CD4-positive, alpha-beta memory T cell (primary cell): ENCODE measurements at regions of chr12 and their contacts with region 1.

Region 1: DNA sequence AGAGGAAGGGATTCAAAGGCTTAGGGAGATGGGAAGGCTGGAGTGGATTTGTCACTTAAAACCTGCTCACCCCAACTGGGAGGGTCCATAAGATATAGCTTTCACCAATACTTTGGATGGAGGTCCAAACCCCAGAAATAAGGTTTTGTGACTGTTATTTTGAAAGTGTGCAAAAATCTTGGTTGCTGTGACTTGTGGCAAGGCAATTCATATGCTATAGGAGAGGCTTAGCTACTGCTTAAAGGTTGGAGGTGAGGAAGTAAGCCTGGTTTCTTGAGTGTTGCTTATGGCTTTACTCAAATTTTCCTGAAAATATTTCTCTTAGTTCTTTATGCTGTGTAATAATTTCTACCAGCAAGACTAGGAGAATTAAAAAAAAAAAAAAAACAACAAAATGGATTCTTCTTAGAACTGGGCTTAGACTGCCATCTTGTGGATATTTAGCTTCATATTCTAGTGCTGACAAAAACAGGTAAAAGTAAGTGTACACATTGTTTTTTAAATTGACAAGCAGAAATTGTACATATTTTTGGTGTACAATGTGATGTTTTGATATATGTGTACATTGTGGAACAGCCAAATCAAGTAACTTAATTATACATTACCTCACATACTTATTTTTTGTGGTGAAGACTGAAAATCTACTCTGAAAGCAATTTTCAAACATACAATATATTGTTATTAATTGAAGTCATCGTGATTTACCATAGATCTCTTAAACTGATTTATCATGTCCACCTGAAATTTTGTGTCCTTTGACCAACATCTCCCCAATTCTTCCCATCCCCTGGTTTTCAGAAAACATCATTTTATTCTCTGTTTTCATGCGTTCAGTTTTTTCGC is 23.0 kb downstream of the PDE6H start:
- DNase-seq: peak in 4 of 5 donors; percentile 59 to 74 (median 64)
- H3K4me3 ChIP-seq: no peak overlapping the region
- H3K4me3 Mint-ChIP-seq: peak overlapping the region in 3 of 8 donors; percentile 47 to 65 (median 64)
- H3K27ac ChIP-seq: no peak overlapping the region
- H3K27ac Mint-ChIP-seq: peak overlapping the region; percentile 8 to 89 (median 58)
- H3K4me1 ChIP-seq: peaks cover 24% of the 10 kb centered on the region
- H3K4me1 Mint-ChIP-seq: peaks cover 22 to 28% (median 25%) of the 10 kb centered on the region in 4 donors
- H3K27me3 ChIP-seq: peaks cover 3% of the 10 kb centered on the region
- H3K27me3 Mint-ChIP-seq: peaks cover 4 to 5% of the 10 kb centered on the region in 2 donors

Region 2: DNA sequence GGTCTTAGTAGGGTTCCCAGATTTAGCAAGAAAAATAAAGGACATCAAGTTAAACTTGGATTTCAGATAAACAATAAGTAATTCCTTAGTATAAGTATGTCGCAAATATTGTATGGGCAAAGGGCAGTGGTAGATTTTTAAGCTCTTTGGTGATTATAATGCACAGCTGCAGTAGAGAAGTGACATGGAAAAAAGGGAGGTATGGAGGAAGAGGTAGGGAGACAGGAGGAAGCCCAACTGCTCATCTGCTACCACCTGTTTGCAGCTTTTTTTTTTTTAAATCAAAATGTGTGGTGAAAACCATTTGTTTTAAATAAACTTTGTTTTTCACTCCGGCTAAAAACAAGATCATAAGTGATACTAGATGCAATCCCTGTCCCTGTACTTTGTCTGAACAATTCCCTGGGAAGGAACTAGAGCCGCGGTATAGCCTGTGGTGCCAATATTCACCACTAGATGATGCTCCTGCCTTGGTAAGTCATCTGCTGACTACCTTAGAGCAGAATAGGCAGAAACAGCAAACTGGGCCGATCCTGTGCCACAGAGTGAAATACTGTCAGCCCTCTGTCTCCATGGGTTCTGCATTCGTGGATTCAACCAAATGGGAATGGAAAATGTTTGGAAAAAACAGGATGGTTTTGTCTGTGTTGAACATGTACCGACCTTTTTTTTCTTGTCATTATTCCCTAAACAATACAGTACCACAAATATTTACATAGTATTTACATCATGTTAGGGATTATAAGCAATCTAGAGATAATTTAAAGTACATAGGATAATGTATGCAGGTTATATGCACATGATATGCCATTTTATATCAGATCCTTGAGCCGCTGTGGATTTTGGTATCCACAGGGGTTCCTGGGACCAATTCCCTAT is 365.7 kb before region 1 on chr12:
- CTCF ChIA-PET with region 1: no interaction called
- POLR2A ChIA-PET with region 1: no interaction called
- intact Hi-C with region 1: loop called (anchors 1 kb)
- DNase-seq: peak; percentile 60 to 67 (median 65)
- H3K4me3 ChIP-seq: no peak overlapping the region
- H3K4me3 Mint-ChIP-seq: no peak overlapping the region
- H3K27ac ChIP-seq: no peak overlapping the region
- H3K27ac Mint-ChIP-seq: no peak overlapping the region
- H3K4me1 ChIP-seq: no peaks in the 10 kb centered on the region
- H3K4me1 Mint-ChIP-seq: no peaks in the 10 kb centered on the region
- H3K27me3 ChIP-seq: no peaks in the 10 kb centered on the region
- H3K27me3 Mint-ChIP-seq: peaks cover 3 to 5% of the 10 kb centered on the region in 2 donors

Region 3: GRCh38 chr12:14810953-14811483 is 184.8 kb before region 1 on chr12:
- CTCF ChIA-PET with region 1: interaction called, 10 read pairs
- POLR2A ChIA-PET with region 1: no interaction called
- intact Hi-C with region 1: no loop called
- DNase-seq: no peak
- H3K4me3 ChIP-seq: no peak overlapping the region
- H3K4me3 Mint-ChIP-seq: peak overlapping the region in 1 of 8 donors; percentile 45
- H3K27ac ChIP-seq: no peak overlapping the region
- H3K27ac Mint-ChIP-seq: no peak overlapping the region
- H3K4me1 ChIP-seq: peaks cover 12% of the 10 kb centered on the region
- H3K4me1 Mint-ChIP-seq: peaks cover 5 to 14% (median 11%) of the 10 kb centered on the region in 4 donors
- H3K27me3 ChIP-seq: no peaks in the 10 kb centered on the region
- H3K27me3 Mint-ChIP-seq: no peaks in the 10 kb centered on the region

Region 4: DNA sequence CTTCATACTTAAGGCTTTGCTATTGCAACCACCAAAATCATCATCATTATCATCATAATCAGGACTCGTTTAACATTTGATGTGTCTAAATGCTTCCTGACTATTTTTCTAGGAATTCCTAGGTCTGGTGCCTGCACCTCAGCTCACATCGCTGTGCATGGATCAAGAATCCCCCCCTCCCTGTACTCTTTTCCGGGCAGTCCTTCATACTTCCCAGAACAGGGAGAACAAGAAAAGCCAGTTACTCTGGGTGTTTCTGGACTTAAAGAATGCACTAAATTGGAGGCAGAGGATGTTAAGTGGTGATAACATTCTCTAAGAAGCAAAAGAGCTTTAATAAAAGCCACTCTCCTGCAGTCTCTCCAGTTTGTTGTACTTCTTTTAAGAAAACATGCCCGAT is 66.8 kb before region 1 on chr12:
- CTCF ChIA-PET with region 1: interaction called, 91 read pairs
- POLR2A ChIA-PET with region 1: interaction called, 3 read pairs
- intact Hi-C with region 1: no loop called
- DNase-seq: no peak
- H3K4me3 ChIP-seq: no peak overlapping the region
- H3K4me3 Mint-ChIP-seq: no peak overlapping the region
- H3K27ac ChIP-seq: no peak overlapping the region
- H3K27ac Mint-ChIP-seq: peak overlapping the region in 3 of 7 donors; percentile 12 to 79 (median 69)
- H3K4me1 ChIP-seq: no peaks in the 10 kb centered on the region
- H3K4me1 Mint-ChIP-seq: peaks cover 2 to 10% (median 5%) of the 10 kb centered on the region in 4 donors
- H3K27me3 ChIP-seq: no peaks in the 10 kb centered on the region
- H3K27me3 Mint-ChIP-seq: no peaks in the 10 kb centered on the region

Region 5: DNA sequence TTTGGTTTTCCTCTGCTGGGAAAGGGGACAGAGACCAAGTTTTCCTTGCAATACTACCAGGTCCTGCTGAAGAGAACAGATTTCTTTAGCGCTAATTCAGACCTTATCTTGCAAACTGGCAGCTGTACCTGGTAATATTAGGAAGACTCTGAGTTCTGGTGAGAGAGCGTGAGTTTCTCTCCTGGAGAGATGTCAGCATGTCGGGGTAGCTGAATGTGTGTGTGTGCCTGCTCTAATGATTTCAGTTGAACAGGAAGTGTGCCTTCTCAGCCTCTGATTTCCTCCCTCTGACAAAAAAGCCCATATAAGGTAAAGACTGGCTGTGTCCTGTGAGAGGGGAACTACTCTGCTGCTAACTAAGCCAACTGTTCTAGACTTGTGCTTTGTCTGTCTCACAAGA is 47.1 kb before region 1 on chr12:
- CTCF ChIA-PET with region 1: interaction called, 9 read pairs
- POLR2A ChIA-PET with region 1: interaction called, 13 read pairs
- intact Hi-C with region 1: no loop called
- DNase-seq: peak; percentile 76 to 86 (median 83)
- H3K4me3 ChIP-seq: peak overlapping the region; percentile 20 to 52
- H3K4me3 Mint-ChIP-seq: peak overlapping the region; percentile 73 to 93 (median 84)
- H3K27ac ChIP-seq: peak overlapping the region; percentile 92
- H3K27ac Mint-ChIP-seq: peak overlapping the region; percentile 94 to 100 (median 97)
- H3K4me1 ChIP-seq: peaks cover 91% of the 10 kb centered on the region
- H3K4me1 Mint-ChIP-seq: peaks cover 63 to 92% (median 85%) of the 10 kb centered on the region in 4 donors
- H3K27me3 ChIP-seq: no peaks in the 10 kb centered on the region
- H3K27me3 Mint-ChIP-seq: no peaks in the 10 kb centered on the region

Region 6: DNA sequence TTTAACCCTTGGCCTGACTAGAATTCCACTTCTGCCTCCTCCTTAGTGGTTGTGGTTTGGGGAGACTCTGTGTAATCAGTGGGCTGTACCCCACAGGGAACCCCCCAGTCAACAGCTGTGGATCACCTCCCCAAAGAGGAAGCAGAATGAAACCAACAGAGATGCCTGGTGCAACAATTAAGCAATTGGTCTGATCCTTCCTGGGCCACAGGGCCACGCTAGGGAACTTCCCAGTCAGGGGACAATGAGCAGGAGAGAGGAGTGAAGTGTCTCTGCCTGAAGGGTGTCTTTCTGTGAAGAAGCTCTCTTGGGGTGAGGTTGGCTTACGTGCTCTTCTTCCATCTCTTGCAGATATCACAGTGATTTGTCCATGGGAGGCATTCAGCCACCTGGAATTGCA is 14.8 kb before region 1 on chr12:
- CTCF ChIA-PET with region 1: interaction called, 18 read pairs
- POLR2A ChIA-PET with region 1: interaction called, 5 read pairs
- intact Hi-C with region 1: no loop called
- DNase-seq: no peak
- H3K4me3 ChIP-seq: no peak overlapping the region
- H3K4me3 Mint-ChIP-seq: peak overlapping the region in 1 of 8 donors; percentile 11
- H3K27ac ChIP-seq: no peak overlapping the region
- H3K27ac Mint-ChIP-seq: peak overlapping the region in 3 of 7 donors; percentile 34 to 66 (median 36)
- H3K4me1 ChIP-seq: peaks cover 38% of the 10 kb centered on the region
- H3K4me1 Mint-ChIP-seq: peaks cover 39 to 57% (median 48%) of the 10 kb centered on the region in 4 donors
- H3K27me3 ChIP-seq: no peaks in the 10 kb centered on the region
- H3K27me3 Mint-ChIP-seq: no peaks in the 10 kb centered on the region

Region 7: DNA sequence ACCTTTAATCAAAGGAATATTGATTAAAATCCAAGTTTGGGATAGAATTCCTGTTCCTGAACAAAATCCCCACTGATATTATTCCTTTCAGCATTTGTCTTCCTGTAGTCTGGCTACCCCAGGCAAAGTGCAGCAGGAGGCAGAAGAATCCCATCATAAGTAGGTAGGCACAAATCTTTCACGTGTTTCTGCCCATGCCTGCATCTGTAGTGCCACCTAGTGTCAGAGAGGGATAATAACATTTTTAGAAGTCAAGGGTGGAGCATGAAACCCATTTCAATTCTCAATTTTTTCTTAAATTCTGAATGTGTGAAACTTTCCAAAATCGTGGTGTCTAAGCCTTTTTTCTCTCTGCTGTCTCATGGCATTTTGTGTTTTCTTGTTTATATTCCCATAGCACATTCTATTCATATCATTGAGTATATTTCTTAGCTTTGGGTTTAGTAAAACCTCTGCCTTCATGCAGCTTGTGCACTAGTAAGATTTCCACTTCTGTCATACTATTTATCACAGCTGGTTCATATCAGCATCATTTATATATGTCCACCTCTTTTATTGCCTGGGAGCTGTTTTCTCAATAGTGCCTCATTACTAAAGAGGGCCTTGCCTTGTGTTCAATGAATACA is 273.2 kb after region 1 on chr12:
- CTCF ChIA-PET with region 1: no interaction called
- POLR2A ChIA-PET with region 1: no interaction called
- intact Hi-C with region 1: loop called (anchors 2 kb)
- DNase-seq: peak in 4 of 5 donors; percentile 43 to 55 (median 48)
- H3K4me3 ChIP-seq: no peak overlapping the region
- H3K4me3 Mint-ChIP-seq: no peak overlapping the region
- H3K27ac ChIP-seq: no peak overlapping the region
- H3K27ac Mint-ChIP-seq: no peak overlapping the region
- H3K4me1 ChIP-seq: no peaks in the 10 kb centered on the region
- H3K4me1 Mint-ChIP-seq: no peaks in the 10 kb centered on the region
- H3K27me3 ChIP-seq: no peaks in the 10 kb centered on the region
- H3K27me3 Mint-ChIP-seq: peaks cover 3% of the 10 kb centered on the region in 2 donors